SK-N-SH (cell line): ENCODE measurements at regions of chr7 and their contacts with region 1.

Region 1: DNA sequence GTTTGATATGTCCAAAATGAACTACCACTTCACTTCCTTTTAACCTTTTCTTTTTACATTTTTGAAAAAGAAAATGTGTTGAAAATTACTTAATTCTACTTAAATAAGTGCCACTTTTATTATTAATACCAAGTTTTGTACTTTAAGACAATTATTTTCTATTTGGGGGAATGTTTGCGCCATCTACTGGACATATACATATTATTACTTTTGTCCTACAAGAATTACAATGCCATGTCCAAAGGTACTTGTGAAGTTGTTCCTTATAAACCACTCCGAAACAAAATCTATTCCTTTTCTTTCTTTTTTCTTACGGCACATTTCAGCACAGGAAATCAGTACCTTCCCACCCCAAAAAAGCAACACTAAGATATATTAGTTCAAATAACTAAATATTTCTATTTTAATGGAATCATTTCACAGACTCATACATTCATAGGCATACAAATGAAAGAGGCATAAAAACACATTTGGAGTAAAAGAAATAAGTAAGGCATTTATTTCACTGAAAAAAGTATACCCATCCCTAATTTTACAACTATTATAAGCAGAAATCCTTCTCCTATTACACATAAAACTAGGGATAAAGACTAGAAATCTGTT is 169.9 kb downstream of the RNF133 start:
- DNase-seq: peak; percentile 17
- H3K4me3 ChIP-seq: no peak overlapping the region; a peak in 1 of 4 replicates
- H3K27ac ChIP-seq: no peak overlapping the region
- H3K4me1 ChIP-seq: no peaks in the 10 kb centered on the region; a peak in 1 of 4 replicates
- H3K27me3 ChIP-seq: no peaks in the 10 kb centered on the region
- CTCF ChIP-seq: peak; percentile 94
- EP300 ChIP-seq: no peak
- RAD21 ChIP-seq: peak; percentile 60

Region 2: GRCh38 chr7:122219253-122219865 is 309.6 kb before region 1 on chr7:
- CTCF ChIA-PET with region 1: interaction called, 27 read pairs
- POLR2A ChIA-PET with region 1: no interaction called
- DNase-seq: peak; percentile 10
- H3K4me3 ChIP-seq: no peak overlapping the region
- H3K27ac ChIP-seq: no peak overlapping the region
- H3K4me1 ChIP-seq: no peaks in the 10 kb centered on the region
- H3K27me3 ChIP-seq: no peaks in the 10 kb centered on the region
- CTCF ChIP-seq: peak; percentile 96
- EP300 ChIP-seq: no peak
- RAD21 ChIP-seq: peak; percentile 81

Region 3: DNA sequence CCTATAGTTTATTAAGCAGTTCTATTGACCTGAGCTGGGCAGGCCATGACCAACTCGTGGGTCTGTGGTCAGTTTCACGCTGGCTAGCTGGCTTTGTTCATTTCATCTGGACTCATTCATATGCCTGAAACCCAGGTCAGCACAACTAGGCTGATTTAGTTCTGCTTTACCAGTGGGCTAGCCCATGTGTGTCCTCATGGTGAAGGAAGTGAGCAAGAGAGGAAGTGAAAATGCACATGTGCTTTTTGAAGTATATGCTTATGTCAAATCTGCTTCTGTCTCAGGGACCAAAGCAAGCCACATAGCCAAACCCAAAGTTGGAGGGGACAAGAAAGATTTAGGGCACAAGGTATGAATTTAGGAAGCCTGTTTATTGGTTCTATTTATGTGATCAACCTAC is 15.5 kb after region 1 on chr7:
- CTCF ChIA-PET with region 1: interaction called, 13 read pairs
- POLR2A ChIA-PET with region 1: no interaction called
- DNase-seq: no peak
- H3K4me3 ChIP-seq: no peak overlapping the region
- H3K27ac ChIP-seq: no peak overlapping the region
- H3K4me1 ChIP-seq: no peaks in the 10 kb centered on the region
- H3K27me3 ChIP-seq: no peaks in the 10 kb centered on the region; the same call in 1 of the 2 replicates
- CTCF ChIP-seq: no peak
- EP300 ChIP-seq: no peak
- RAD21 ChIP-seq: no peak